ENCODE measurements at regions of chr5 and their contacts with region 1.

Region 1: DNA sequence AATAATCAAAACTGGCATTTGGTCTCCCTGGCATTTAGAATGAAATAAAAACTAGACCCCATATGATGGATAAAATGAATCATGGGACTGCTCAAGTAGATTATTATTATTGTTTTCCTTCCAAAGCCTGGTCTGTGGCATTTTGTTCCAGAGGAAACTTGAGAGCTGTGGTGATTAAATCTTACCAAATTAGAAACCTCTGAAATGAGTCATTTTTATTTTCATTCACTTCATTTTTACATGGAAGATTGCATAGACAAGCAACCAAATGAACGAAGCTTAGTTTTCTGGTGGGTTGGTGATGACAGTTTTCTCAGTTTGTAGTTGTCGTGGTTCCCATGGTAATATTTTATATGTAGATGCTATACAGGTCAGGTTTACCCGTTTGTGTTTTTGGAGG is 23.4 kb downstream of the PAM start:
- DNase-seq: no peak
- ATAC-seq: no peak

Region 2: GRCh38 chr5:102971697-102972293 is 193.3 kb after region 1 on chr5:
- intact Hi-C with region 1: loop called (anchors 10 kb)
- DNase-seq: no peak
- ATAC-seq: peak; percentile 53